ENCODE measurements at regions of chr5 and their contacts with region 1.

Region 1: GRCh38 chr5:141878711-141879425 is 658 bp upstream of the PCDH1 start:
- DNase-seq: peak; percentile 74 to 95 (median 88)
- ATAC-seq: peak; percentile 85 to 90
- H3K4me3 Mint-ChIP-seq: peak overlapping the region; percentile 80 to 97 (median 82)
- H3K27ac Mint-ChIP-seq: peak overlapping the region in 8 of 10 donors; percentile 0 to 90 (median 36)
- H3K4me1 Mint-ChIP-seq: peaks cover 21 to 48% (median 31%) of the 10 kb centered on the region in 4 donors
- H3K27me3 Mint-ChIP-seq: peaks cover 42 to 90% (median 69%) of the 10 kb centered on the region in 5 donors

Region 2: DNA sequence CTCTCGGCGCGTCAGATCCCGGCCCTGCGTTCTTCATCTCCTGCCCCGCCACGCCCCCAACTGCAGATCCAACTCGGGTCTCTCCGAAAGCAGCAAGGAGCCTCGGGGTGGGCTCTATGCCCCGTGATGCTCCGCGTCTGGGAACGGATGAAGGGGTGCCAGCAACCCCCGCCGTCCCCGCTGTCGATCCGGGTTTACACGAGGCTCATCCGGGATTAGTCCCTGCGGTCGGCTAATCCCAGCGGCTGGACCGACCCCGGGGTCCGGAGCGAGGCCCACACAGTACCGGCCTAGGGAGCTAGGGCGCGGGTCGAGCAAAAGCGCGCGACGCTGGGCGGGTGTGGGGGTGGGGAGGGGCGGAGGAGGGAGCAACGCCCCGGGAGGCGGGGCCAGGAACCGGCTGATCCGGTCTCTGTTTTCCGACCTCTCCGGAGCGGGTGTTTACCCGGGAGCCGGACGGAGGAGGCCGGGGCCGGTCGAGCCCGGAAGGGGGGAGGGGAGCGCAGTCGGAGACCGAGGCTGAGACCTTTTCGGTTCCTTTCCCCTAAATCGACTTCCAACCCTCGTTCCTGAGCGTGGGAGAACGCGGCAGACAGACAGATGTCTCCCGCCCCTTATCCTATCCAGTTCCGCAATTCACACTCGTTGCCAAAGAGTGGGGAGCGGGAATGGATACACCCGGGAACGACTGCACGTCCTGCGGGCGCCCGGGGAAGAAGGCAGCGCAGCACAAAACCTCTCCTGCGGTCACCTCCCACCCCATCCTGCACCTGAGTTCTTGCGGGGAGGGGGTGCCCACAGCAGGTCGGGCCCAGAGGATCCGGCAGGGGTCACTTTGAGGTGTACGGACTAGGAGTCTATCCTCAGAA is 29.3 kb before region 1 on chr5:
- POLR2A ChIA-PET with region 1: interaction called, 17 read pairs
- DNase-seq: peak; percentile 39 to 77 (median 59)
- ATAC-seq: peak; percentile 72 to 78
- H3K4me3 Mint-ChIP-seq: peak overlapping the region; percentile 82 to 93 (median 87)
- H3K27ac Mint-ChIP-seq: peak overlapping the region in 9 of 10 donors; percentile 60 to 92 (median 87)
- H3K4me1 Mint-ChIP-seq: peaks cover 8 to 24% (median 13%) of the 10 kb centered on the region in 4 donors
- H3K27me3 Mint-ChIP-seq: peaks cover 0 to 5% (median 1%) of the 10 kb centered on the region in 5 donors

Region 3: DNA sequence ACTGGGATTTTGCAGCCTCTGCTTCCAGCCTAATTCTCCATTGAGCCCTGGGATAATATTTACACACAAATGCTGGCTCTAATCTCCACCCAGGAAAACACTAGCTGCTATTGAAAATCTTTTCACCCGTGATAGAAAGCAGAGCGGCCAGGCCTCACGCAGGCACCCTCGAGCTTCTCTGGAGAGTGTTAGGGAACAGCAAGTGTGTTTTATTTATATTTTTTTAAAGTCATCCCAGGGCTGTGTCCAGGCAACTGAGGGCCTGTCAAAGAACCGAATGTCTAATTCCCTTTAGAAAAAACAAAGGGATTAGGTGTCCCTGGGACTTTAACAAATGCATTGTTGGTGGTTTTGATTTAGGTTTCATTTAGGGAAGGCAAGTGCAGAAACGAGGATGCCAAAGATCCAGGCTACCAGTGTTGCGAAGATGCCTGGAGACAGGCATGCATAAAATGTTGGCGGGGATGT is 497.1 kb after region 1 on chr5:
- POLR2A ChIA-PET with region 1: no interaction called
- DNase-seq: peak in 1 of 10 donors; percentile 14
- ATAC-seq: no peak
- H3K4me3 Mint-ChIP-seq: no peak overlapping the region
- H3K27ac Mint-ChIP-seq: no peak overlapping the region
- H3K4me1 Mint-ChIP-seq: peaks cover 0 to 6% (median 2%) of the 10 kb centered on the region in 4 donors
- H3K27me3 Mint-ChIP-seq: no peaks in the 10 kb centered on the region